ENCODE measurements at regions of chr1 and their contacts with region 1.

Region 1: GRCh38 chr1:203304919-203305808 is at the start of gene BTG2:
- DNase-seq: peak; percentile 91
- H3K4me3 ChIP-seq: peak within 1 kb of the TSS; percentile 70 to 97 (median 73)
- H3K27ac ChIP-seq: peak within 1 kb of the TSS; percentile 42
- H3K4me1 ChIP-seq: peaks cover 19% of the 10 kb centered on the region
- H3K27me3 ChIP-seq: peaks cover 4 to 7% of the 10 kb centered on the region in 2 experiments
- CTCF ChIP-seq: no peak
- POLR2A ChIP-seq: peak; percentile 99
- total RNA-seq, gene BTG2: 40.3 and 50.1 TPM in 2 replicates

Region 2: GRCh38 chr1:203117611-203118575 is 187.3 kb before region 1 on chr1:
- CTCF ChIA-PET with region 1: no interaction called
- POLR2A ChIA-PET with region 1: no interaction called
- dilution Hi-C with region 1: no loop called
- intact Hi-C with region 1: no loop called
- DNase-seq: peak; percentile 51
- H3K4me3 ChIP-seq: no peak overlapping the region
- H3K27ac ChIP-seq: no peak overlapping the region
- H3K4me1 ChIP-seq: no peaks in the 10 kb centered on the region
- H3K27me3 ChIP-seq: peaks cover 19 to 29% of the 10 kb centered on the region in 2 experiments
- CTCF ChIP-seq: peak; percentile 70 to 95
- POLR2A ChIP-seq: no peak

Region 3: DNA sequence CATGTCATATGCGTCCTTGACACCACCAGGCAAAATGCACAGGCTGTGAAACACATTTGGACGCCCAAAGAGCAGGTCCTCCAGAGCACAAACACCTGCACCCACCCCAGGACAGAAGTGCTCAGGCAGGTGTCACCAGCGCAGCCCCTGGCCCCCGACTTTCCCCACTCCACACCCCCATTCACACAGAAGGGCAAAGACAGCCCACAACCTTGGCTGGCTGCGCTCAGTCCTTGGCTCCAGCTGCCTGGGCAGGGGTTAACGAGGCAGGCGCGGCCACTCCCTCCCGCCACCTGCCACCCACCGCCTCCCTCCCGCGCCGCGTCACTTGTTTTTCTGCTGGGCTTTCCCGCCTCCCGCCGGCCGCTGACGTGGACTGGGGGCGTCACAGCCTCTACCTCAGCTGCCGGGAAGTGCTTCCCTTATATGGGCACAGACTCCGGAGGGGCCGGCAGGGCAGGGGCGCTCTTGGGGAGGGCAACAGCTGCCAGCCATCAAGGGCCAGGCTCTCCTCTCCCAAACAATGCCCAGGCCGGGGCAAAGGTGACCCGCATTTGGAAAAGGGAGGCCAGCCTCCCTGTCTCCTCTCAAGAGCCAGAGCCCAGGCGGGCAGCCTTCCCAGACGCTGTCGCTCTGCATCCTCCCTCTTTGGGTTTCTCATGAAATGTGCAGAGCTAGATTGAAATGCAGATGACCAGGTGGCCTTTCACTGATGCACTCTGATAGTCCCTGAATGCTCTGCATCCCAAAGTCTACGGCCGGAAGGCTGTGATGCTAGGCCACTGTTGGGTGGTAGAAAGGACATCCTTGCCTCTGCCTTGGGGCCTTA is 14.7 kb before region 1 on chr1:
- CTCF ChIA-PET with region 1: interaction called, 4 read pairs
- POLR2A ChIA-PET with region 1: interaction called, 9 read pairs
- dilution Hi-C with region 1: no loop called
- intact Hi-C with region 1: loop called (anchors 1 kb)
- DNase-seq: peak; percentile 84
- H3K4me3 ChIP-seq: no peak overlapping the region
- H3K27ac ChIP-seq: no peak overlapping the region
- H3K4me1 ChIP-seq: peaks cover 15% of the 10 kb centered on the region
- H3K27me3 ChIP-seq: no peaks in the 10 kb centered on the region
- CTCF ChIP-seq: no peak
- POLR2A ChIP-seq: no peak

Region 4: GRCh38 chr1:203320591-203321272 is 15.6 kb after region 1 on chr1:
- CTCF ChIA-PET with region 1: interaction called, 81 read pairs
- POLR2A ChIA-PET with region 1: interaction called, 115 read pairs
- dilution Hi-C with region 1: no loop called
- intact Hi-C with region 1: loop called (anchors 1 kb)
- DNase-seq: peak; percentile 94
- H3K4me3 ChIP-seq: no peak overlapping the region
- H3K27ac ChIP-seq: peak overlapping the region; percentile 2
- H3K4me1 ChIP-seq: peaks cover 24% of the 10 kb centered on the region
- H3K27me3 ChIP-seq: peaks cover 12 to 25% of the 10 kb centered on the region in 2 experiments
- CTCF ChIP-seq: no peak
- POLR2A ChIP-seq: peak; percentile 29

Region 5: GRCh38 chr1:203326830-203327683 is 21.9 kb after region 1 on chr1:
- CTCF ChIA-PET with region 1: interaction called, 81 read pairs
- POLR2A ChIA-PET with region 1: interaction called, 115 read pairs
- dilution Hi-C with region 1: no loop called
- intact Hi-C with region 1: loop called (anchors 1 kb)
- DNase-seq: peak; percentile 94
- H3K4me3 ChIP-seq: peak overlapping the region; percentile 19 to 52 (median 39)
- H3K27ac ChIP-seq: no peak overlapping the region
- H3K4me1 ChIP-seq: peaks cover 19% of the 10 kb centered on the region
- H3K27me3 ChIP-seq: peaks cover 8 to 23% of the 10 kb centered on the region in 2 experiments
- CTCF ChIP-seq: no peak
- POLR2A ChIP-seq: peak; percentile 8

Measured in endothelial cell of umbilical vein (primary cell).